ENCODE measurements at regions of chr6 and their contacts with region 1.

Region 1: DNA sequence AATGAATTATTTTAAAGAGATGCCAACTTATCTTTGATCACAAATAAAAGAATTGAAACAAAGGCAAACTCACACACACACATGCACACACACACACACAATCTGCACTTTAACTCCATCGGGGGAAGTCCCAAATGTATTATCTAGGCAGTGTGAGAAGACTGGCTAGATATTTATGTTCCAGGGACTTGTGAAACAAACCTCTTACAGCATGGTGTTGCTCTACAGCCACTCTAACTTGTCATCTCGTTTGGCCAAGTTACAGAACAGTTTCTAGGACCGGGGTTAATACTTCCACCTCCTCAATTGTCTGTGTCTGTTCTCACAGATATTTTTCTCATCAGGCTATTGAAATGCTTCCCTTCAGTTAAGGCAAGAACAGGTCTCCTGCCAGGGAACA is 855.0 kb downstream of the EPHA7 start:
- DNase-seq: no peak
- ATAC-seq: no peak
- H3K4me3 ChIP-seq: no peak overlapping the region
- H3K27ac ChIP-seq: no peak overlapping the region
- H3K4me1 ChIP-seq: no peaks in the 10 kb centered on the region
- H3K27me3 ChIP-seq: no peaks in the 10 kb centered on the region
- CTCF ChIP-seq: no peak
- POLR2A ChIP-seq: no peak
- RAD21 ChIP-seq: no peak

Region 2: DNA sequence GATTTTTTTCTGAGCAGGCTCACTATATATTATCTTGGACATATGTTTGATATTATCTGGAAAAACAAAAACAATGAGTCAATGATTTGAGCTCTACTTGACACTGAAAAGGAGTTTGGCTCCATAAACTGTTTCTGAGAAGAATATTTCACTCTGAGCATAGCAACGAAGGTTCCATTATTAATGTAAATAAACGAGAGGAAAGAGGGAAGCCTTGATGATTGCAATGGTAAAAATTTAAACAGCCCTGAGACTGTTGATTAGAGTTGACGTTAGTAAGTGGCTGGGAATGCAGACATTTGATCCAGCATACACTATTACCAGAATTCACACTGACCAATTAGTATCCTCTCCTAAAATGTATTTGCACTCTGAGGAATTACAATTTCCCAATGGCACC is 235.0 kb before region 1 on chr6:
- CTCF ChIA-PET with region 1: no interaction called
- POLR2A ChIA-PET with region 1: no interaction called
- dilution Hi-C with region 1: no loop called
- in situ Hi-C with region 1: no loop called
- intact Hi-C with region 1: no loop called
- DNase-seq: peak; percentile 63
- ATAC-seq: peak; percentile 91
- H3K4me3 ChIP-seq: no peak overlapping the region
- H3K27ac ChIP-seq: no peak overlapping the region
- H3K4me1 ChIP-seq: no peaks in the 10 kb centered on the region
- H3K27me3 ChIP-seq: no peaks in the 10 kb centered on the region
- CTCF ChIP-seq: no peak
- POLR2A ChIP-seq: no peak
- RAD21 ChIP-seq: no peak

Region 3: GRCh38 chr6:92589976-92590375 is 25.6 kb after region 1 on chr6:
- CTCF ChIA-PET with region 1: no interaction called
- POLR2A ChIA-PET with region 1: no interaction called
- dilution Hi-C with region 1: no loop called
- in situ Hi-C with region 1: no loop called
- intact Hi-C with region 1: loop called (anchors 1 kb)
- DNase-seq: peak; percentile 0
- ATAC-seq: no peak
- H3K4me3 ChIP-seq: no peak overlapping the region
- H3K27ac ChIP-seq: no peak overlapping the region
- H3K4me1 ChIP-seq: no peaks in the 10 kb centered on the region
- H3K27me3 ChIP-seq: no peaks in the 10 kb centered on the region
- CTCF ChIP-seq: no peak
- POLR2A ChIP-seq: no peak
- RAD21 ChIP-seq: no peak

Region 4: GRCh38 chr6:93008357-93008756 is 444.0 kb after region 1 on chr6:
- CTCF ChIA-PET with region 1: no interaction called
- POLR2A ChIA-PET with region 1: no interaction called
- dilution Hi-C with region 1: no loop called
- in situ Hi-C with region 1: no loop called
- intact Hi-C with region 1: no loop called
- DNase-seq: no peak
- ATAC-seq: no peak
- H3K4me3 ChIP-seq: no peak overlapping the region
- H3K27ac ChIP-seq: no peak overlapping the region
- H3K4me1 ChIP-seq: no peaks in the 10 kb centered on the region
- H3K27me3 ChIP-seq: no peaks in the 10 kb centered on the region
- CTCF ChIP-seq: no peak
- POLR2A ChIP-seq: no peak
- RAD21 ChIP-seq: no peak

Measured in IMR-90 (cell line).